AG04449 (cell line): ENCODE measurements at regions of chrX and their contacts with region 1.

Region 1: DNA sequence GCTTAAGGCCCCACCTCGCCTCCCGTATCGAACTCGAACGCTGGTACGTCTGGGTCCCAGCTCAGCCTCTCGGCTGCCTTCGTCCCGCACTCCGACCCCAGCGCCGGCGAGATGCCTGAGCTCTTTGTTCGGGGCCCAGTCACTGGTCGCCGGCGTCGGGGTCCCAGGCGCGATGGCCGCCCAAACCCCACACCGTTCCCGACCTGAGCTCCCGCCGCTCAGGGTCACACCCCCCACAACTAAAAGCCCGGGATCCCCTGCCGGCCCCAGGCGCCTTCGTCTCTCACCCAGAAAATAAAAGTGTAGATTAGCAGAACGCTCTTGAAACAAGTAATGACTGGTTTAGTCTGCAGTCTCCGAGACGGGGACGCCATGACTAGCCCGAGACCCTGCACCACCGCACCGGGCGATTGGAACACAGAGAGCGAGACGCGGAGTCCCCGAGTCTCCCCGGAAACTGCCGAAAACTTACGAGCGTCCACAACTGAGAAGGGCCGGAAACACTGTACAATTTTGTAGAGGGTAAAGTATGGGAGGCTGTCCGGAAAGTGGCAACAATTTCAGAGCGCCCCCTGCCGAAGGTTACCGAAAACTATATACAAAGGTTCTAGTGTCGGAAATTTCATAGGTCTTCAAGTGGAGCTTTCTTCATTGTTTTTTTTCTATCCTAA is at the start of gene TSPAN6:
- DNase-seq: no peak
- H3K4me3 ChIP-seq: peak within 1 kb of the TSS; percentile 66
- CTCF ChIP-seq: peak; percentile 33

Region 2: GRCh38 chrX:100615005-100615404 is 21.5 kb before region 1 on chrX:
- CTCF ChIA-PET with region 1: interaction called, 27 read pairs
- POLR2A ChIA-PET with region 1: interaction called, 5 read pairs
- DNase-seq: no peak
- H3K4me3 ChIP-seq: no peak overlapping the region
- CTCF ChIP-seq: peak; percentile 52

Region 3: DNA sequence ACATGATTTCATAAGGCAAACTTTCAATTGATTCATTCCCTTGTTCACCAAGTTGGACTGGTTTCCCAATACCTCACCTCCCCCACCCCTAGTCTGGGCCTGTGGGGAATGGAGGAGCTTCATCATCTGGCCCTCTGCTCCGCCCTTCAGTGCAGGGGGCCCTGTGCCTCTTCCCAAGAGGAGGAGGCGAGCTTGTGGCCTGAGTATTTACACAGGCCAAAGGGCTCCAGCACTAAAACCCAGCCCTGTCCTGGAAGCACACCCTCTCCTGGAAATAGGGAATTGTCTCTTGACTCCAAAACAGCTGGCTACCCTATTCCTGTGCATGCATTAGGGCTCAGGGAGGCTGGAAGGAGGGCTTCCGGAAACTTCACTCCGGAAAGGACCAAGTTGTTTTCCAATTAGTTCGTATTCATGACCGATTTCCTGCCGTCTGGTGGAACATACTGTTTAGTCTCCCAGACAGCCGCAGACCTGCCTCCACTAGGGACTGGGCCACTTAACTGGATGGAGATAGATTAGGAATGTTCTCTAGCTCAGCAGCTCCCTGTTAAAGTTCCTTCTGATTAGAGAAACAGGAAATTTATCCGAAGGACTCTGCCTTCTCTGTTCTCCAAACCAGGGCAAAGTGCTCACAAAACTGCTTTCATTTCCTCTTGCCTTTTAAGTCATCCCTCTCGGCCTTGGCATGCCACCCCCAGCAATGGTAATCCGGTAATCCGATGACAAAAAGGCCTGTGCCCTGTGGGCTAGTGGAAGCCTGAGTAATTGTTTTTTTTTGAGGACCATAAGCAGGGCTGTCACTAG is 13.3 kb after region 1 on chrX:
- CTCF ChIA-PET with region 1: interaction called, 21 read pairs
- POLR2A ChIA-PET with region 1: no interaction called
- DNase-seq: peak; percentile 72
- H3K4me3 ChIP-seq: no peak overlapping the region
- CTCF ChIP-seq: no peak

Region 4: DNA sequence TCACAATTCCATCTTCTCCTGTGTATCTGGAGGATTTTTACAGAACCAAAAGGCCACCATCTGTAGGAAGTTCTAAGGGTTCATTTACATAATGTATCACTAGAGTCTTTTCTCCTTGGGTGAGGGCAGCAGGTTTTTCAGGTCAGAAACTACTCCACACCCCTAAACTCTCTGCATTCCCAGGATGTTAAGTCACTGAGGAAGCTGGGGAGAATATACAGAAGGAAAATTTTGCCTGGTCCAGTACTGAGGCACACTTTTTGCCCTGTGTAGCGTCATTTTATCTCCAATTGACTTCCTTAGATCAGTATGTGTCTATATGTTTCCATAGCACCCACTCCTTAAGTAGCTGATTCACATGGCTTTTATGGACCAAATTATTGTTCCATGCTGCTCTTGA is 275.3 kb after region 1 on chrX:
- CTCF ChIA-PET with region 1: no interaction called
- POLR2A ChIA-PET with region 1: no interaction called
- DNase-seq: no peak
- H3K4me3 ChIP-seq: no peak overlapping the region
- CTCF ChIP-seq: no peak

Region 5: GRCh38 chrX:100946299-100946920 is 310.0 kb after region 1 on chrX:
- CTCF ChIA-PET with region 1: no interaction called
- POLR2A ChIA-PET with region 1: no interaction called
- DNase-seq: no peak
- H3K4me3 ChIP-seq: no peak overlapping the region
- CTCF ChIP-seq: no peak